ENCODE measurements at regions of chr1 and their contacts with region 1.

Region 1: GRCh38 chr1:40143891-40144575 is 17.2 kb upstream of the RLF start:
- DNase-seq: no peak
- H3K4me3 ChIP-seq: no peak overlapping the region
- CTCF ChIP-seq: peak; percentile 69

Region 2: DNA sequence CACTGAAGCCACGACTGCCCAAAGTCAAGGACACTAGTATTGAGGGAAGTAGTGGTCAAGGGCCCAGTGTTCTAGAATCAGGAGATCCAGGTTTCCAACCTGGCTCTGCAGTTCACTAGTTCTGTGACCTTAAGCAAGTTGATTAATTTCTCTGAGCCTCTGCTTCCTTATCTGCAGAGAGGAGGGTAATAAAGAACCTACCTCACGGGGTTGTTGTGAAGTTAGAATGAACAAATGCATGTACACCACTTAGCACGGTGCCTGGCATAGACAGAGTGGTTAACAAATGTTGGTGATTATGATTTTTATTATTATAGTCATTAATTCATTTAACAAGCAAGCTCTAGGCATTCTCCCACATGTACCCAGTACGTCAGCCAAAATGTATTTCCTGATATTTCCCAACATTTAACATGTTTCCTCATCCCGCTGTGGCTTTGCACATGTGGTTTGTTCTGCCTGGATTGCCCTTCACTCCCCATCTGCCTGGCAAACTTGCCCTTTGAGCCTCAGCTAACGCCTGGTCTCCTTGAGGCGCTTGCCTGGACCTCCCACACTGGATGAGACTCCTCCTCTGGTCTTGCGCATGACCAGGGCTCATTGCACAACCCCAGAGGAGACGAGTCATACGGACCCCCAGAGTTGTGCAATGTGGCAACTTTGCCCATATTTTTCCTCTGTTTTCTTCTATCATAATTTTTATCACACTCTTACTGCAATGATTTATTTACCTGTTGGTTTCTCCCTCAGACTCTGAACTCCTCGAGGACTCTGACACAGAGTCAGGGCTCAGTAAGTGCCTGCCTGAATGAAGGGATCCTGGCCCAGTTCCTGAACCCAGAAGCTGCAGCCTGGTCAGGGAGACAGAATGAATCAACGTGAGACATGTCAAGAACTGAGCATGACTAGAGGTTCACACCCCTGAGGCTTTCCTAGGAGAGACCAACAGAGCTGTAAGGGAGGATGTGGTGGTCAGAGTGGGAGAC is 209.8 kb before region 1 on chr1:
- CTCF ChIA-PET with region 1: no interaction called
- POLR2A ChIA-PET with region 1: no interaction called
- DNase-seq: peak; percentile 88
- H3K4me3 ChIP-seq: no peak overlapping the region; the same call in 1 of the 2 replicates
- CTCF ChIP-seq: no peak

Region 3: GRCh38 chr1:40078512-40079333 is 65.3 kb before region 1 on chr1:
- CTCF ChIA-PET with region 1: interaction called, 14 read pairs
- POLR2A ChIA-PET with region 1: no interaction called
- DNase-seq: no peak
- H3K4me3 ChIP-seq: no peak overlapping the region
- CTCF ChIP-seq: peak; percentile 79

Region 4: GRCh38 chr1:40132383-40133311 is 11.4 kb before region 1 on chr1:
- CTCF ChIA-PET with region 1: interaction called, 17 read pairs
- POLR2A ChIA-PET with region 1: interaction called, 5 read pairs
- DNase-seq: no peak
- H3K4me3 ChIP-seq: peak overlapping the region; percentile 49
- CTCF ChIP-seq: no peak

Region 5: GRCh38 chr1:40344597-40344996 is 200.6 kb after region 1 on chr1:
- CTCF ChIA-PET with region 1: interaction called, 433 read pairs
- POLR2A ChIA-PET with region 1: no interaction called
- DNase-seq: no peak
- H3K4me3 ChIP-seq: no peak overlapping the region
- CTCF ChIP-seq: no peak

Region 6: GRCh38 chr1:40404670-40405462 is 260.8 kb after region 1 on chr1:
- CTCF ChIA-PET with region 1: interaction called, 77 read pairs
- POLR2A ChIA-PET with region 1: no interaction called
- DNase-seq: no peak
- H3K4me3 ChIP-seq: no peak overlapping the region
- CTCF ChIP-seq: peak; percentile 36

Region 7: GRCh38 chr1:40438391-40439015 is 294.5 kb after region 1 on chr1:
- CTCF ChIA-PET with region 1: interaction called, 32 read pairs
- POLR2A ChIA-PET with region 1: no interaction called
- DNase-seq: no peak
- H3K4me3 ChIP-seq: no peak overlapping the region
- CTCF ChIP-seq: peak; percentile 45